CD8-positive, alpha-beta memory T cell (primary cell): ENCODE measurements at regions of chr10 and their contacts with region 1.

Region 1: DNA sequence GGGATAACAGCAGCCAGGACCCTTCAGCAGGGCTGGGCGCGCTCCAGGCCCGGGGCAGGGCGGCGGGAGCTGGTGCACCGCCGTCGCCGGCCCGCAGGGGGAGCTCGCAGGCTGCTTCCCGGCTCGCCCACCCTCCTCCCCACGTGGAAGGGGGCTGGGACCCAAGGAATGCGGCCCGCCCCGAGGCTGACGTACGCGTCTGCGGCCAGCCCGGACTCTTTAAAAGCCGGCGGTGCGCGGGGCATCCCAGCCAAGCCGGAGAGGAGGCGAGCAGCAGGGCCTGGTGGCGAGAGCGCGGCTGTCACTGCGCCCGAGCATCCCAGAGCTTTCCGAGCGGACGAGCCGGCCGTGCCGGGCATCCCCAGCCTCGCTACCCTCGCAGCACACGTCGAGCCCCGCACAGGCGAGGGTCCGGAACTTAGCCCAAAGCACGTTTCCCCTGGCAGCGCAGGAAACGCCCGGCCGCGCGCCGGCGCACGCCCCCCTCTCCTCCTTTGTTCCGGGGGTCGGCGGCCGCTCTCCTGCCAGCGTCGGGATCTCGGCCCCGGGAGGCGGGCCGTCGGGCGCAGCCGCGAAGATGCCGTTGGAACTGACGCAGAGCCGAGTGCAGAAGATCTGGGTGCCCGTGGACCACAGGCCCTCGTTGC is at the start of gene PFKFB3:
- DNase-seq: peak; percentile 85 to 94 (median 87)
- H3K4me3 ChIP-seq: peak within 1 kb of the TSS; percentile 83
- H3K4me3 Mint-ChIP-seq: peak within 1 kb of the TSS; percentile 91 to 99 (median 95)
- H3K27ac ChIP-seq: peak within 1 kb of the TSS; percentile 64
- H3K27ac Mint-ChIP-seq: peak within 1 kb of the TSS; percentile 73 to 96 (median 92)
- H3K4me1 ChIP-seq: peaks cover 19% of the 10 kb centered on the region
- H3K4me1 Mint-ChIP-seq: peaks cover 20 to 41% (median 34%) of the 10 kb centered on the region in 3 donors
- H3K27me3 ChIP-seq: no peaks in the 10 kb centered on the region
- H3K27me3 Mint-ChIP-seq: peaks cover 0 to 2% of the 10 kb centered on the region in 2 donors
- total RNA-seq, gene PFKFB3: 53.6 to 60.1 TPM

Region 2: GRCh38 chr10:5977471-5978229 is 225.2 kb before region 1 on chr10 and contains the start of gene IL15RA:
- CTCF ChIA-PET with region 1: no interaction called
- POLR2A ChIA-PET with region 1: interaction called, 11 read pairs
- DNase-seq: peak; percentile 74 to 92 (median 80)
- H3K4me3 ChIP-seq: peak within 1 kb of the TSS; percentile 86
- H3K4me3 Mint-ChIP-seq: peak within 1 kb of the TSS; percentile 96 to 99 (median 98)
- H3K27ac ChIP-seq: peak within 1 kb of the TSS; percentile 89
- H3K27ac Mint-ChIP-seq: peak within 1 kb of the TSS; percentile 91 to 98 (median 96)
- H3K4me1 ChIP-seq: peaks cover 16% of the 10 kb centered on the region
- H3K4me1 Mint-ChIP-seq: peaks cover 24 to 45% (median 40%) of the 10 kb centered on the region in 3 donors
- H3K27me3 ChIP-seq: no peaks in the 10 kb centered on the region
- H3K27me3 Mint-ChIP-seq: no peaks in the 10 kb centered on the region
- total RNA-seq, gene IL15RA: 30.1 to 33.5 TPM

Region 3: DNA sequence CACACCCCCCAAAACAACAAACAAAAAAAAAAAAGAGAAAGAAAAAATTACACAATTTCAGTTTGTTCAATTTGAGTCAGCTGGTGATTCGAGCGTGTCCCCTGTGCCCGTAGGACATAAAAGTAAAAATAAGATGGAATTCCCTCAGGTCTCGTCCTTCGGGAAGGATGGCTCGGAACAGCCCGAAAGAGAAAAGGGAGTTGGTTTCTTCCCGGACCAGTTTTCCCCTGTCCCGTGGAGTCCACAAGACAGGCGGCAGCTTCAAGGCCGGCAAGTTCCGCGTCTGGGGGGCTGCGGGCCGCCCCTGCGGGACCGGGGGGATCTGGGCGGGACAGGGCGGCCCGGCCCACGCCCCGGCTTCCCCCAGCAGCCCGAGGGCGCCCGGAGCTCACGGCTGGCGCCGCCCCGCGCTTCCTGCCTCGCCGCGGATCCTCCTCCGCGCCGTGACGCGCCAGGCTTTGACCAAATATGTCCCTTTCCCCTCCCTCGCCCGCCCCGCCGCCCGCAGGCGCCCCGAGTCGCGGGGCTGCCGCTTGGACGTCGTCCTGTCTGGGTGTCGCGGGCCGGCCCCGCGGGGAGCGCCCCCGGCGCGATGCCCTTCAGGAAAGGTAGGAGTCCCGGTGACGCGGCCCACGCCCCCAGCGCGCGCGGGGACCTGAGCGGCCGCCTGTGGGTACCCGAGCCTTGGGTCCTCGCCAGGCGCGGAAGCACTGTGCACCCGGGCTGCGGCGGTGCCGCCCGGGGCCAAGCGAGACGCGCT is 58.2 kb before region 1 on chr10:
- CTCF ChIA-PET with region 1: interaction called, 10 read pairs
- POLR2A ChIA-PET with region 1: interaction called, 3 read pairs
- DNase-seq: peak; percentile 83 to 92 (median 87)
- H3K4me3 ChIP-seq: peak overlapping the region; percentile 74
- H3K4me3 Mint-ChIP-seq: peak overlapping the region; percentile 83 to 92 (median 90)
- H3K27ac ChIP-seq: peak overlapping the region; percentile 73
- H3K27ac Mint-ChIP-seq: peak overlapping the region; percentile 38 to 97 (median 88)
- H3K4me1 ChIP-seq: peaks cover 45% of the 10 kb centered on the region
- H3K4me1 Mint-ChIP-seq: peaks cover 58 to 68% (median 62%) of the 10 kb centered on the region in 3 donors
- H3K27me3 ChIP-seq: no peaks in the 10 kb centered on the region
- H3K27me3 Mint-ChIP-seq: peaks cover 0 to 4% of the 10 kb centered on the region in 2 donors

Region 4: GRCh38 chr10:6171881-6172695 is 30.7 kb before region 1 on chr10:
- CTCF ChIA-PET with region 1: interaction called, 15 read pairs
- POLR2A ChIA-PET with region 1: interaction called, 3 read pairs
- DNase-seq: no peak
- H3K4me3 ChIP-seq: no peak overlapping the region
- H3K4me3 Mint-ChIP-seq: no peak overlapping the region
- H3K27ac ChIP-seq: no peak overlapping the region
- H3K27ac Mint-ChIP-seq: peak overlapping the region in 3 of 8 donors; percentile 20 to 57 (median 29)
- H3K4me1 ChIP-seq: peaks cover 53% of the 10 kb centered on the region
- H3K4me1 Mint-ChIP-seq: peaks cover 63 to 90% (median 66%) of the 10 kb centered on the region in 3 donors
- H3K27me3 ChIP-seq: no peaks in the 10 kb centered on the region
- H3K27me3 Mint-ChIP-seq: no peaks in the 10 kb centered on the region

Region 5: GRCh38 chr10:6328699-6329423 is 126.1 kb after region 1 on chr10:
- CTCF ChIA-PET with region 1: no interaction called
- POLR2A ChIA-PET with region 1: no interaction called
- DNase-seq: no peak
- H3K4me3 ChIP-seq: no peak overlapping the region
- H3K4me3 Mint-ChIP-seq: no peak overlapping the region
- H3K27ac ChIP-seq: no peak overlapping the region
- H3K27ac Mint-ChIP-seq: peak overlapping the region in 1 of 8 donors; percentile 14
- H3K4me1 ChIP-seq: no peaks in the 10 kb centered on the region
- H3K4me1 Mint-ChIP-seq: no peaks in the 10 kb centered on the region
- H3K27me3 ChIP-seq: no peaks in the 10 kb centered on the region
- H3K27me3 Mint-ChIP-seq: peaks cover 0 to 5% of the 10 kb centered on the region in 2 donors

Region 6: GRCh38 chr10:6409971-6410651 is 207.3 kb after region 1 on chr10:
- CTCF ChIA-PET with region 1: interaction called, 50 read pairs
- POLR2A ChIA-PET with region 1: interaction called, 11 read pairs
- DNase-seq: peak; percentile 30 to 76 (median 47)
- H3K4me3 ChIP-seq: peak overlapping the region; percentile 16
- H3K4me3 Mint-ChIP-seq: peak overlapping the region; percentile 63 to 83 (median 79)
- H3K27ac ChIP-seq: peak overlapping the region; percentile 52
- H3K27ac Mint-ChIP-seq: peak overlapping the region; percentile 94 to 98 (median 96)
- H3K4me1 ChIP-seq: peaks cover 29% of the 10 kb centered on the region
- H3K4me1 Mint-ChIP-seq: peaks cover 26 to 50% (median 46%) of the 10 kb centered on the region in 3 donors
- H3K27me3 ChIP-seq: no peaks in the 10 kb centered on the region
- H3K27me3 Mint-ChIP-seq: peaks cover 0 to 1% of the 10 kb centered on the region in 2 donors

Region 7: GRCh38 chr10:7161484-7162250 is 958.9 kb after region 1 on chr10:
- CTCF ChIA-PET with region 1: no interaction called
- POLR2A ChIA-PET with region 1: no interaction called
- DNase-seq: no peak
- H3K4me3 ChIP-seq: no peak overlapping the region
- H3K4me3 Mint-ChIP-seq: no peak overlapping the region
- H3K27ac ChIP-seq: no peak overlapping the region
- H3K27ac Mint-ChIP-seq: peak overlapping the region in 2 of 8 donors; percentile 35 to 77
- H3K4me1 ChIP-seq: peaks cover 18% of the 10 kb centered on the region
- H3K4me1 Mint-ChIP-seq: peaks cover 15 to 26% (median 17%) of the 10 kb centered on the region in 3 donors
- H3K27me3 ChIP-seq: no peaks in the 10 kb centered on the region
- H3K27me3 Mint-ChIP-seq: no peaks in the 10 kb centered on the region